Endothelial cell of umbilical vein (primary cell): ENCODE measurements at regions of chr10 and their contacts with region 1.

Region 1: GRCh38 chr10:34637418-34637911 is 177.6 kb downstream of the PARD3 start:
- DNase-seq: peak; percentile 57
- H3K4me3 ChIP-seq: no peak overlapping the region
- H3K27ac ChIP-seq: no peak overlapping the region
- H3K4me1 ChIP-seq: peaks cover 4% of the 10 kb centered on the region
- H3K27me3 ChIP-seq: no peaks in the 10 kb centered on the region
- CTCF ChIP-seq: peak; percentile 91 to 95
- POLR2A ChIP-seq: no peak

Region 2: DNA sequence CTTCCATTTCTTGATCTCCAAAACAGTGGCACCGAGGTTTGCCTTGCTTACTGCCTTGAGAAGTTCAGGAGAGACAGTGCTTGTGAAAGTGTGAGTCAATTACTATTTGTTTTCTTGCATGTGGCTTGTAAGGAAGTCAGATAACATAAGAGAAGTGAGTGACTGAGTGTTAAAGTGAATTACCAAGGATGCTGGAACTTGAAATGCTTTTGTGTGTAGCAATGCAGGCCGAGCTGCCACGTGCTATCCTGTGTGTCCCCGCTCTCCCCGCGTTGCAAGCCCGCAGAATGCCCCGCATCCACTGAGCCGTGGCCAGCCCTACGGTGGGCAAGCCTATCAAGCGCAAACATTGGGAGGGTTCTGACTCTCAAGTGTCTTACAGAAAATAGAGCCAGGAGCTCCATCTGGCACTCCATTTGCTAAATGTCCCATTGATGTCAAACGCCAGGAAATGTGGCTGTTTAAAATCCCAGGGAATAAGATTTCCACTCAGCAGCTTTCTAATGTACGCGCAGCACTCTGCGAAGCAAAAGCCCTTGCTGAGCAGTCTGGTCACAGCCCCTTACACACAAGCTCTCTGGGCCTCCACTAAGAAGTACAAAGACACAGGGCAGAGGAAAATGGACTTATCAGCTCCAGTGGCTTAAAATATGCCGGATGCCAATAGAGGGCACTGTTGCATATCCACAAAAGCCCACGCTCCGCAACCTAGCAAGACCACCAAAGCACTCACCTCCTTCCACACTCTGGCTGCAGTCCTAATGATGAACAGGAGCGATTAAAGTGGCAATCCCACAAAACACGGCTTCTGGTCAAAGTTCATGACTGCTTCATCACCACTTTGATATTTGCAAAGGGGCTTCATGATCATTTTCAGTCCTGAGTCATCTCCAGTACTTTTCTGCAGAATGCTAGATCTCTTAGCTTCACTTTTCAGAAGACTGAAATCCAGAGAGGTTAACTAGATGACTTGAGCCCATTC is 1521.4 kb before region 1 on chr10:
- CTCF ChIA-PET with region 1: interaction called, 10 read pairs
- POLR2A ChIA-PET with region 1: no interaction called
- dilution Hi-C with region 1: no loop called
- intact Hi-C with region 1: loop called (anchors 5 kb)
- DNase-seq: peak; percentile 81
- H3K4me3 ChIP-seq: no peak overlapping the region
- H3K27ac ChIP-seq: no peak overlapping the region
- H3K4me1 ChIP-seq: peaks cover 3% of the 10 kb centered on the region
- H3K27me3 ChIP-seq: no peaks in the 10 kb centered on the region
- CTCF ChIP-seq: peak; percentile 75 to 77
- POLR2A ChIP-seq: no peak

Region 3: DNA sequence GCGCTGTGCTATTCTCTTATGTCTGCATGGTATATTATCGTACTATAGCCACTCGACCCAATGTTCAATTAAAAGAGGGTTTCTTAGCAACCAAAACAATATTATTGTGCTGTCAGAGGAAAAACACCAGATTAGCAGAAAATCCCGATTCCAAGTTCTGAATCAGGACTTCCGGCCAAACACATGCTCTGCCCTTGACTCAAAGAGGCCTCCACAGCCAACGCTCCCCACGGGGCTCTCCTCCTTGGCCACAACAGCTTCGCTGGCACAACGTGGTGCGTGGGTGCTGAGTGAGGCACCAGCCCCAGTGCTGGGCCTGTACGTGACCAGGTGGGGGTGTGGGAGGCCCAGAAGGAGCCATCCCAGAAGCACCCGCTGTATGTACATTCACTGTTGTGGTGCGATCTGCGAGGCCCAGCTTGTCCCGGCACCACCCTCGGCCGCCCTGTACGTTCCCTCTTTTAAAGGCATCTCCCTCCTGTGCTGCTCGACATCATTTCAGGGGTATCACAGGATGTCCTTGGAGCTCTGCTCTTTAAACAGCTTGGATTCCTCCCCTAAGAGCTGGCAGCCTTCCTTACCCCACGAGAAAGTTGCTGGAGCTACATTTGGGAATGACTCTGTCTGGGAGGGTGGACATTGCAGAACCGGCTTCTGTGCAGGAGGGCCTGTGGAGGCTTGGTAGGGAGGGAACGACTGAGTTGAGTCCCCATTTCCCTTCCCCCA is 558.6 kb before region 1 on chr10:
- CTCF ChIA-PET with region 1: interaction called, 22 read pairs
- POLR2A ChIA-PET with region 1: no interaction called
- dilution Hi-C with region 1: no loop called
- intact Hi-C with region 1: no loop called
- DNase-seq: peak; percentile 87
- H3K4me3 ChIP-seq: no peak overlapping the region
- H3K27ac ChIP-seq: no peak overlapping the region
- H3K4me1 ChIP-seq: peaks cover 6% of the 10 kb centered on the region
- H3K27me3 ChIP-seq: peaks cover 0 to 2% of the 10 kb centered on the region in 2 experiments
- CTCF ChIP-seq: no peak
- POLR2A ChIP-seq: no peak

Region 4: GRCh38 chr10:34254596-34254995 is 382.9 kb before region 1 on chr10:
- CTCF ChIA-PET with region 1: interaction called, 4 read pairs
- POLR2A ChIA-PET with region 1: no interaction called
- dilution Hi-C with region 1: no loop called
- intact Hi-C with region 1: loop called (anchors 10 kb)
- DNase-seq: peak; percentile 88
- H3K4me3 ChIP-seq: no peak overlapping the region
- H3K27ac ChIP-seq: no peak overlapping the region
- H3K4me1 ChIP-seq: peaks cover 12% of the 10 kb centered on the region
- H3K27me3 ChIP-seq: no peaks in the 10 kb centered on the region
- CTCF ChIP-seq: no peak
- POLR2A ChIP-seq: no peak

Region 5: DNA sequence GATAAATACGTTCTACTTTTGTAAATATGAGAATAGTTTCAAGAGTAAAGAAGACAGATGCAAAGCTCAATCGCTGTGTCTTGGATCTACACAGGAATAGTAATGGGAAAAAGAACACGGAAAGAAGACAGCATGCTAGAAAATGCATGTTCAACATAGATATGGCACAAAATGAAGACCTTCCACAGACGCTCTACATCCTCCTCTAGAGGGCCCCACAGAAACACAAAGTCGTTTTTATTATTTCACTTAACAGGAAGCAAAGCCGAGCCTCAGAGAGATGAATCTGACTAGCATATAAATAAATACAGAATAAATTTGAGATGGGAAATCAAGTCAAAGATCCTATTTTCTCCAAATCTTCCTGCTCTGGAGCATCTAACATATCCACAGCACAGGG is 114.9 kb before region 1 on chr10:
- CTCF ChIA-PET with region 1: interaction called, 109 read pairs
- POLR2A ChIA-PET with region 1: no interaction called
- dilution Hi-C with region 1: no loop called
- intact Hi-C with region 1: loop called (anchors 1 kb)
- DNase-seq: peak; percentile 53
- H3K4me3 ChIP-seq: no peak overlapping the region
- H3K27ac ChIP-seq: no peak overlapping the region
- H3K4me1 ChIP-seq: peaks cover 22% of the 10 kb centered on the region
- H3K27me3 ChIP-seq: no peaks in the 10 kb centered on the region
- CTCF ChIP-seq: peak; percentile 35 to 51
- POLR2A ChIP-seq: no peak

Region 6: DNA sequence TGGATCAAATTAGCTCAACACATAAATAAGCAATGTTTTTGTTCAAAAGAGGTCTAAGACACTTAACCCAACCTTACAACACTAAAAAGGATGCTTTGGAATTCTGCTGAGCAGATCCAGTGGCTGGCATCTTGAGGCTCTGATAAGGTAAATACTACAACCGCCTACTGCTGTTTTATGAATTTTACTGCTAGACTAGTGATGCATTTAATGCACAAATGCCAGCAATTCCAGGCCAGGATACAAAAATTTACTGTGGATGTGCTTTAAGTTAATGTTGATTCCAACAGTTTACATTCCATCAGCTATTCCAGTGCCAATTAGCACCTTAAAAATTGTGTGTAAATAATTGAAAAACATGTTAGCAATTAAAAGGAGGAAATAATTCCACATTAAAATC is 83.7 kb before region 1 on chr10:
- CTCF ChIA-PET with region 1: no interaction called
- POLR2A ChIA-PET with region 1: no interaction called
- dilution Hi-C with region 1: no loop called
- intact Hi-C with region 1: no loop called
- DNase-seq: no peak
- H3K4me3 ChIP-seq: no peak overlapping the region
- H3K27ac ChIP-seq: no peak overlapping the region
- H3K4me1 ChIP-seq: no peaks in the 10 kb centered on the region
- H3K27me3 ChIP-seq: no peaks in the 10 kb centered on the region
- CTCF ChIP-seq: no peak
- POLR2A ChIP-seq: no peak

Region 7: GRCh38 chr10:34584164-34584563 is 53.3 kb before region 1 on chr10:
- CTCF ChIA-PET with region 1: interaction called, 6 read pairs
- POLR2A ChIA-PET with region 1: no interaction called
- dilution Hi-C with region 1: no loop called
- intact Hi-C with region 1: loop called (anchors 5 kb)
- DNase-seq: peak; percentile 31
- H3K4me3 ChIP-seq: no peak overlapping the region
- H3K27ac ChIP-seq: no peak overlapping the region
- H3K4me1 ChIP-seq: peaks cover 32% of the 10 kb centered on the region
- H3K27me3 ChIP-seq: no peaks in the 10 kb centered on the region
- CTCF ChIP-seq: no peak
- POLR2A ChIP-seq: no peak

Region 8: GRCh38 chr10:34710391-34710751 is 72.9 kb after region 1 on chr10:
- CTCF ChIA-PET with region 1: no interaction called
- POLR2A ChIA-PET with region 1: no interaction called
- dilution Hi-C with region 1: no loop called
- intact Hi-C with region 1: no loop called
- DNase-seq: peak; percentile 59
- H3K4me3 ChIP-seq: no peak overlapping the region
- H3K27ac ChIP-seq: no peak overlapping the region
- H3K4me1 ChIP-seq: peaks cover 36% of the 10 kb centered on the region
- H3K27me3 ChIP-seq: no peaks in the 10 kb centered on the region
- CTCF ChIP-seq: no peak
- POLR2A ChIP-seq: no peak

Region 9: GRCh38 chr10:34768261-34768971 is 131.0 kb after region 1 on chr10:
- CTCF ChIA-PET with region 1: no interaction called
- POLR2A ChIA-PET with region 1: no interaction called
- dilution Hi-C with region 1: no loop called
- intact Hi-C with region 1: no loop called
- DNase-seq: no peak
- H3K4me3 ChIP-seq: no peak overlapping the region
- H3K27ac ChIP-seq: no peak overlapping the region
- H3K4me1 ChIP-seq: peaks cover 7% of the 10 kb centered on the region
- H3K27me3 ChIP-seq: no peaks in the 10 kb centered on the region
- CTCF ChIP-seq: no peak
- POLR2A ChIP-seq: no peak